Activated CD4-positive, alpha-beta T cell treated with anti-CD3 and anti-CD28 coated beads, Interleukin-2, amount 10 ng/mL, durations not matched to agents 24 days and 14 days (primary cell): ENCODE measurements at regions of chr9 and their contacts with region 1.

Region 1: GRCh38 chr9:125143375-125144090 is at the start of gene SCAI:
- DNase-seq: peak; percentile 99
- H3K4me3 Mint-ChIP-seq: peak within 1 kb of the TSS; percentile 100
- H3K27ac Mint-ChIP-seq: peak within 1 kb of the TSS; percentile 95
- H3K4me1 Mint-ChIP-seq: peaks cover 33% of the 10 kb centered on the region
- H3K27me3 Mint-ChIP-seq: no peaks in the 10 kb centered on the region
- total RNA-seq, gene SCAI: 11.0 and 13.4 TPM in 2 replicates

Region 2: GRCh38 chr9:124869986-124870560 is 273.5 kb before region 1 on chr9:
- intact Hi-C with region 1: loop called (anchors 1 kb)
- DNase-seq: peak; percentile 94
- H3K4me3 Mint-ChIP-seq: peak overlapping the region; percentile 99
- H3K27ac Mint-ChIP-seq: peak overlapping the region; percentile 99
- H3K4me1 Mint-ChIP-seq: peaks cover 42% of the 10 kb centered on the region
- H3K27me3 Mint-ChIP-seq: no peaks in the 10 kb centered on the region

Region 3: DNA sequence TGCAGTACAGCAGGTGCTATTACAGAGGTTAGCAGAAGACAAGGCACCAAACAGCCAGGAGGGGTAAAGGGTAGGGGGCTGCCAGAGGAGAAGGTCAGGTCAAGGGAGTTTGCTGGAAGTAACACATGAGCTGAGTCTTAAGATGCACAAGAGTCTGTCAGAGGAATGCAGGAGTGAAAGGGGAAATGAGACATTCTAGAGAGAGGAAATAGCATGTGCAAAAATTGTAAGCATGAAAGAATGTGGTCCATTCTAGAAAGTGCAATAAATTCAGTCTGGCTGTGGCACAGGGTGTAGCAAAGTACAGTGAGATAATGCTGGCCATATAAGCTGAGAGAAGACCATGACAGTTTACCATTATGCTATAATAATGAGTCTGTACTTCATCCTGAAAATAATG is 209.2 kb before region 1 on chr9:
- intact Hi-C with region 1: no loop called
- DNase-seq: peak; percentile 40
- H3K4me3 Mint-ChIP-seq: no peak overlapping the region
- H3K27ac Mint-ChIP-seq: no peak overlapping the region
- H3K4me1 Mint-ChIP-seq: peaks cover 13% of the 10 kb centered on the region
- H3K27me3 Mint-ChIP-seq: no peaks in the 10 kb centered on the region

Region 4: GRCh38 chr9:125024917-125025316 is 118.6 kb before region 1 on chr9:
- intact Hi-C with region 1: loop called (anchors 5 kb)
- DNase-seq: no peak
- H3K4me3 Mint-ChIP-seq: no peak overlapping the region
- H3K27ac Mint-ChIP-seq: no peak overlapping the region
- H3K4me1 Mint-ChIP-seq: peaks cover 12% of the 10 kb centered on the region
- H3K27me3 Mint-ChIP-seq: no peaks in the 10 kb centered on the region

Region 5: GRCh38 chr9:125126019-125126746 is 17.4 kb before region 1 on chr9:
- intact Hi-C with region 1: loop called (anchors 1 kb)
- DNase-seq: peak; percentile 94
- H3K4me3 Mint-ChIP-seq: peak overlapping the region; percentile 78
- H3K27ac Mint-ChIP-seq: peak overlapping the region; percentile 97
- H3K4me1 Mint-ChIP-seq: peaks cover 27% of the 10 kb centered on the region
- H3K27me3 Mint-ChIP-seq: no peaks in the 10 kb centered on the region

Region 6: DNA sequence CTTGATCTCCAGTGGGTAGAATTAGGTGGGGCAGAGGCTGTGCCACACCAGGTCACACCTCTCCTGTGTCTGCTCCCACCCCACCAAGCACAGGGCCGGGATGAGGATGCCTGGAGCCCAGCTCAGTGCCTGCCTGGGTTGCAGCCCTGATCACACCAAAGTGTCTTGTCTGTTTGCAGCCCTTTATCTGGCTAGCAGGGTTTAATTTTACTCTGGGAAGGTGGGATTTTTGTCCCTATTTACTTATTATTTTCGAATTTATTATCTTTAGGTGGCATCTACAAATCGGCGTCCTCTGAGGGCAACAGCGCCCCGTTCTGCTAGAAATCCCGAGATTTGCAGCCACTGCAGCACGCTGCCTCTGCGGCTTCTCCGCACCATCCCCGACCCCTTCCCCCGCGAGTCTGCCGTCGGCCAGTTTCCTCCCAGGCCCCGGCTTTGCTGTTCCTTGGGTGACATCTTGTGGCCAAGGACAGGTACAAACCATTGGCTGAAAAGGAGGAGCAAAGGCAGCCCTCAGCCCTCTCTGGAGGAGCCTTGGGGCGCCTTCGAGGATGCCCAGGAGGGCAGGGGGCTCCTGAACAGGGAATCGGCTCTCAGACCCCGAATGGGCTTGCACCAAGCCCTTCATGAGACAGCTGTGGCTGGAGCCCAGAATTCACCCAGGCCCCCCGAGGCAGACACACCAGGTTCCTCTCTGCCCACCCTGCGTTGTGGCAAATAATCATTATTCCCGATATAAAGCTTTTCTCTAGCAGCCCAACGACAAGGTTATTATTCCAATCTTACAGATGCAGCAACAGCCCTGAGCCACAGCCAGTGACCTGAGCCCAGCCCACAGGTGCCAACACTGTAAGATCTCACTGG is 231.1 kb after region 1 on chr9:
- intact Hi-C with region 1: loop called (anchors 10 kb)
- DNase-seq: peak; percentile 90
- H3K4me3 Mint-ChIP-seq: peak overlapping the region; percentile 70
- H3K27ac Mint-ChIP-seq: no peak overlapping the region
- H3K4me1 Mint-ChIP-seq: peaks cover 4% of the 10 kb centered on the region
- H3K27me3 Mint-ChIP-seq: peaks cover 3% of the 10 kb centered on the region

Region 7: DNA sequence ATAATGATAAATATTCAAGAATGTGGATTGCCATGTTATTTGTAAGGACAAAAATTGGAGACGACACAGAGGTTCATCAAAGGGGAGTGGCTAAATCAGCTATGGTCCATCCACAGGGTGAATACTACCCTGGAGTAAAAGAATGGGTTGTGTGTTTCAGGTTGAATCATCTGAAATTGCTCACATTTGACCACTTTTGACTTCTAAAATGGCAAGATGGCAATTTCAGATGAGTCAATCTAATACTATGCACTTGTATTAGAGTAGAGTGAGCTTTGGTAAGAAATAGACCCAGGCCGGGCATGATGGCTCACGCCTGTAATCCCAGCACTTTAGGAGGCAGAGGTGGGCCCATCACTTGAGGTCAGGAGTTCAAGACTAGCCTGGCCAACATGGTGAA is 249.9 kb after region 1 on chr9:
- intact Hi-C with region 1: no loop called
- DNase-seq: no peak
- H3K4me3 Mint-ChIP-seq: no peak overlapping the region
- H3K27ac Mint-ChIP-seq: no peak overlapping the region
- H3K4me1 Mint-ChIP-seq: no peaks in the 10 kb centered on the region
- H3K27me3 Mint-ChIP-seq: no peaks in the 10 kb centered on the region